Sigmoid colon (tissue), 7 donors: ENCODE measurements at regions of chr6 and their contacts with region 1.

Region 1: GRCh38 chr6:111605100-111605751 is 452 bp downstream of the TRAF3IP2 start:
- DNase-seq: peak; percentile 92
- H3K4me3 ChIP-seq: peak overlapping the region; percentile 46 to 59 (median 54)
- H3K27ac ChIP-seq: peak overlapping the region; percentile 94 to 98 (median 96)
- H3K4me1 ChIP-seq: peaks cover 0 to 70% (median 62%) of the 10 kb centered on the region in 4 donors
- H3K27me3 ChIP-seq: no peaks in the 10 kb centered on the region
- CTCF ChIP-seq: no peak
- EP300 ChIP-seq: peak in 3 of 4 donors; percentile 48 to 68 (median 54)
- POLR2A ChIP-seq: peak in 1 of 2 donors; percentile 21

Region 2: GRCh38 chr6:111259089-111259831 is 346.0 kb before region 1 on chr6:
- intact Hi-C with region 1: loop called (anchors 5 kb)
- DNase-seq: peak; percentile 99
- H3K4me3 ChIP-seq: peak overlapping the region; percentile 76 to 89 (median 80)
- H3K27ac ChIP-seq: peak overlapping the region; percentile 90 to 95 (median 92)
- H3K4me1 ChIP-seq: peaks cover 0 to 47% (median 17%) of the 10 kb centered on the region in 4 donors
- H3K27me3 ChIP-seq: peaks cover 0 to 6% (median 0%) of the 10 kb centered on the region in 3 donors
- CTCF ChIP-seq: peak; percentile 90 to 99 (median 95)
- EP300 ChIP-seq: peak in 1 of 4 donors; percentile 53
- POLR2A ChIP-seq: peak; percentile 44 to 67

Region 3: DNA sequence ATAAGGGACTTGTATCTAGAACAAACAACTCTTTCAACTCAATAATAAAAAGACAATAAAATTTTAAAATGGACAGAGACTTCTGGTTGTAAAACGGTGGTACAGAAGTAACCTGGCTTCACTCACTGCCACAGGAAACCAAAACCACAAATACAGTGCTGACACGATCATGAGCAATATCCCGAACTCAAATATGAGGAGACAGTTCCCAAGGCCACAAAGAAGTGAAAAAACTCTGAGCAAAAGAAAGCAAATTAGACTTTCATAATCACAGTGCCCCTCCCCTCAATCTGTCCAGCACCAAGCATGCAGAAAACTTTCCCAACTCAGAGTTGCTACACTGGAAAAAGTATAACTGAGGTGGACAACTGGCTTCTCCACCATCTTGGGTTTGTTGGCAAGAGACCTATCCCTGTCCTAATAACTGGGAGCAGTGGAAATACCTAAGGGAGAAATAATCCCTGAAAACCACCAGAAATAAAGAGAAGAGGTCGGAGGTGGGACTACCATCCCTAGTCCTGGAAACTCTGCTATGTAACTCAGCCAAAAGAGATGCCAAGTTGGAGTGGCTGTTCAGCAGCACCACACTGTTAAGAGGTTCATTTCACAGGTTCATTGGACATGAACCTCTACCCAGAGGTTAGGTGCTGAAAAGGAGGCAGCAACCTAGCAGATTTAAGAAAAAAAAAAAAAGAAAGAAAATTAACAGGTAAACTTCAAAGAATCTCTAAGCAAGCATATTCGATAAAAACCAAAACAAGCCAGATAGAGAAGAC is 177.7 kb before region 1 on chr6:
- intact Hi-C with region 1: loop called (anchors 2 kb)
- DNase-seq: no peak
- H3K4me3 ChIP-seq: no peak overlapping the region
- H3K27ac ChIP-seq: peak overlapping the region in 3 of 4 donors; percentile 68 to 79 (median 77)
- H3K4me1 ChIP-seq: peaks cover 0 to 97% (median 77%) of the 10 kb centered on the region in 4 donors
- H3K27me3 ChIP-seq: no peaks in the 10 kb centered on the region
- CTCF ChIP-seq: no peak
- EP300 ChIP-seq: no peak
- POLR2A ChIP-seq: no peak

Region 4: DNA sequence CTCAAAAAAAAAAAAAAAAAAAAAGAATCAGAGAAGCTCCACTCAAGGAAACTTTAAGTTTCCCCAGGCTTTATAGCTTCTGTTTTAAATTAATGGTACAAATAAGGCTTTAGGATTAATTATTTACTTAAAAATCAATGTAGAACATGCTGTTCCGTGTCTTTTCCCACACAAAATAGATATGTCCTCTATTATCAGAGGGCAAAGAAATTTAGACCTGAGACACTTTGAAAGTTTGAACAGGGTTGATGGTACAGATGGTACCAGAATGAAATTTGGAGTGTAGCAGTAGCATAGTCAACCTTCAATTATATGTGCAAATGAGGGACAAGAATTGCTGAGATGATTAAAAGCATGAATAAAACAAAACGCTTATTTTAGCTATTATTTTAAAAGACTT is 90.0 kb before region 1 on chr6:
- intact Hi-C with region 1: no loop called
- DNase-seq: no peak
- H3K4me3 ChIP-seq: no peak overlapping the region
- H3K27ac ChIP-seq: no peak overlapping the region
- H3K4me1 ChIP-seq: no peaks in the 10 kb centered on the region
- H3K27me3 ChIP-seq: no peaks in the 10 kb centered on the region
- CTCF ChIP-seq: no peak
- EP300 ChIP-seq: no peak
- POLR2A ChIP-seq: no peak

Region 5: GRCh38 chr6:111552241-111552744 is 52.9 kb before region 1 on chr6:
- intact Hi-C with region 1: loop called (anchors 5 kb)
- DNase-seq: peak; percentile 91
- H3K4me3 ChIP-seq: peak overlapping the region in 2 of 4 donors; percentile 6 to 9
- H3K27ac ChIP-seq: peak overlapping the region; percentile 76 to 85 (median 82)
- H3K4me1 ChIP-seq: peaks cover 0 to 45% (median 32%) of the 10 kb centered on the region in 4 donors
- H3K27me3 ChIP-seq: no peaks in the 10 kb centered on the region
- CTCF ChIP-seq: no peak
- EP300 ChIP-seq: peak in 2 of 4 donors; percentile 54 to 69
- POLR2A ChIP-seq: no peak

Region 6: GRCh38 chr6:111663692-111664564 is 58.7 kb after region 1 on chr6:
- intact Hi-C with region 1: loop called (anchors 2 kb)
- DNase-seq: peak; percentile 85
- H3K4me3 ChIP-seq: no peak overlapping the region
- H3K27ac ChIP-seq: peak overlapping the region; percentile 66 to 85 (median 79)
- H3K4me1 ChIP-seq: peaks cover 0 to 97% (median 81%) of the 10 kb centered on the region in 4 donors
- H3K27me3 ChIP-seq: no peaks in the 10 kb centered on the region
- CTCF ChIP-seq: no peak
- EP300 ChIP-seq: peak in 1 of 4 donors; percentile 6
- POLR2A ChIP-seq: no peak

Region 7: DNA sequence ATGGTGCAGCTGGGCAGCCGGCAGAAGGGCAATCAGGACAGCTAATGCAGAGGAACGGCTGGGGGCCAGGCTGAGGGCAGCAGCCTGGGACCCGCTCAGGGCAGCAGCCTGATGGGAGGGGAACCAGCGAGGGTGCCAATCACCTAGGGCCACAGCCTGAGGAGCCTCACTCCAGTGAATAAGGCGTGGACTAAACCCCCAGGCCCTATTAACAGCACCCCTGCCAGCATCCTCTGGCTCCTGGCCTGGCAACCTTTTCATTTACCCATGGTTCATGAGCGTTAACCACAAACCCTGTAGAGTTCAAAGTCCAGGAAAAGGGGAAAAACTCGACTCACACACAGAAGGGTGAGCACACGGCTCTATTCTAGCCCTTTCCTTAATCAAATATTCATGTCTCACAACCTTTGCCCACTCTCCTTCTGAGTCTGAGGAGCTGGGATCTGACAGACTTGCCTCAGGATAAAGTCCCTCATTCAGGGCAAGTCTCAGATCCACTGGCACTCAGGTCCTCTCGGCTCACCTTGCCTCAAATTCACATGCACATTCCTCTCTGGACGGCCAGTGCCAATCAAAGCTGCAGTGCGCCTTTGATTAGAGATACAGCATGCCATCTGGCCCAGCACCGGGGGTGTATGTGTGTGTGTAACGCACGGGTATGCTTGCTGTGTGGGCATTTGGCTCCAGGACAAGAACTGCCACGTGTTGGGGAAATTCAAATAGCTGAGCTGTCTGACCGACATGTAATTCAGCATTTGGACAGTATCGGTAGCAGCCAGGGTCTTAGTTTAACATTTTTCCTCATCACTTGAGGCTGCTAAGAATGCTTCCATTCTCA is 87.3 kb after region 1 on chr6:
- intact Hi-C with region 1: loop called (anchors 5 kb)
- DNase-seq: peak; percentile 69
- H3K4me3 ChIP-seq: no peak overlapping the region
- H3K27ac ChIP-seq: peak overlapping the region in 3 of 4 donors; percentile 74 to 82 (median 78)
- H3K4me1 ChIP-seq: peaks cover 0 to 49% (median 41%) of the 10 kb centered on the region in 4 donors
- H3K27me3 ChIP-seq: no peaks in the 10 kb centered on the region
- CTCF ChIP-seq: no peak
- EP300 ChIP-seq: no peak
- POLR2A ChIP-seq: no peak

Region 8: DNA sequence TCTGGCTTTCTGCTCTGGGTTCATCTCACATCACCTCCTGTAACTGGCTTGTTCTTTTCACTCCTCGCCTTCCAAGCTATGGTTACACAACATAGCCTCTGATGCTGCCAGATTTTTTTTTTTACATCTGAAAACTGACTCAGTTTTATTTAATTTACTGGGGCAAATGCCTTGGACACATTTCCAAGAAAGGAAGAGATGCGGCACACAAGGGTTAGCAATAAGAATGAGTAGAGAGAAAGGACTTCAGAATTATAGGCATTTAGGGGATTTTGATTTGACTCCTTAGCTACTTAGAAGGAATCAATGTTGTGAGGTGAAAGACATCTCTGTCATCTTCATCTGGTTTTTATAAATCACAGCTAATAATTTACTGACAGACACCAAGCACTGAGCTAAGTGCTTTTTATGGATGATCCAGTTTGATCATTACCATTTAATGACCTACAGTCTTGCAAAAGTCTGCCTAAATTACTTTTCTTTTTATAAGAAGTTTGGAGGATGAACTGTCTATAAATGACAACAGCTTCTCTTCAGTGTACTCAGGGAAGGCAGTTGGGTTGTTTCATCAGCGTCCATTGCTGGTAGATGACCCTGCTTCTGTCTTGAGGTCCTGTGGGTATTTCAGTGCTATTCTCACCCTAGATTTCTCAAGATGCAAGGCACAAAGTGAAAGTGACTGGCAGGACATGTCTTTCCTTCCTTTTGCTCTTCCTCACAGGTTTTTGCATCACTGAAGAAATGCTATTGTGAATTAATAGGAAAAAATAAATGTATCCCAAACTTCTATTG is 618.0 kb after region 1 on chr6:
- intact Hi-C with region 1: loop called (anchors 10 kb)
- DNase-seq: no peak
- H3K4me3 ChIP-seq: no peak overlapping the region
- H3K27ac ChIP-seq: peak overlapping the region; percentile 79 to 89 (median 84)
- H3K4me1 ChIP-seq: peaks cover 0 to 99% (median 94%) of the 10 kb centered on the region in 4 donors
- H3K27me3 ChIP-seq: no peaks in the 10 kb centered on the region
- CTCF ChIP-seq: no peak
- EP300 ChIP-seq: peak in 3 of 4 donors; percentile 32 to 64 (median 37)
- POLR2A ChIP-seq: no peak